Natural killer cell (primary cell): ENCODE measurements at regions of chr7 and their contacts with region 1.

Region 1: DNA sequence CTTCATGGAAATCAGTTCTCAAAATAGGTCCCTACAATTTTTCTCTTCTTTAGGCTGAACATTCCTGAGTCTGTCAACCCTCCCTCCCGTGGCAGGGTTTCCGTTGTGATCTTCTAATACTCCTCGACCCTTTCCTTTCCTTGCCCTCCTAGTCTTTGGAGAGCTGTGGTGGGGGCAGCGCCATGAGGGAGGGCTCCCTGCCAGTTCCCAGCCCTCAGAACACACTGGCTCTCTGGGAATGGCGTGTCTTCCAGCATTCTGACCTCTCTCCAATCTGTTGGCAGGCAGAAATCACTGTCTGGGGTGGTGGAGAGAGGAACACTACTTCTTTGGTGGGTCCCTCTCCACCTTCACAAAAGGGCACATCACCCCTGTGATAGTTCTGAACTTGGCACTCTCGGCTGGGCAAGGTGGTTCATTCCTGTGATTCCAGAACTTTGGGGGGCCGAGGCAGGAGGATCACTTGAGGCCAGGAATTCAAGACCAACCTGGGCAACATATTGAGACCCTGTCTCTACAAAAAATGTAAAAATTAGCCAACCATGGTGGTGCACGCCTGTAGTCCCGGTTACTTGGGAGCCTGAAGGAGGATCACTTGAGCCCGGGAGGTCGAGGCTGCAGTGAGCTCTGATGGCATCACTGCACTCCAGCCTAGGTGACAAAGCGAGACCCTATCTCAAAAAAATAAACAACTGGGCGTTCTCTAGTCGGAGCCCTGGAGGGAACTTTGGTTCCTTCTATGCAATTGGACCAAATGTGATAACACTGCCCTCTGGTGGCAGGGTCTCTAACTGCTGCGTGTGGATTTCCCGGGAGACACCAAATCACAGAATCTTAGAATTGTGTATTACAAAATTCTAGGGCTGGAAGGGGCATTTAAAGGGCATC is 13.1 kb upstream of the ARPC1A start:
- DNase-seq: peak; percentile 65 to 86
- ATAC-seq: peak; percentile 81 to 87 (median 87)
- H3K4me3 ChIP-seq: no peak overlapping the region
- H3K4me3 Mint-ChIP-seq: peak overlapping the region; percentile 37
- H3K27ac ChIP-seq: no peak overlapping the region
- H3K27ac Mint-ChIP-seq: no peak overlapping the region
- H3K4me1 ChIP-seq: peaks cover 6% of the 10 kb centered on the region
- H3K4me1 Mint-ChIP-seq: peaks cover 0 to 5% of the 10 kb centered on the region in 2 donors
- H3K27me3 ChIP-seq: no peaks in the 10 kb centered on the region
- H3K27me3 Mint-ChIP-seq: peaks cover 0 to 3% of the 10 kb centered on the region in 2 donors
- CTCF ChIP-seq: peak; percentile 80

Region 2: DNA sequence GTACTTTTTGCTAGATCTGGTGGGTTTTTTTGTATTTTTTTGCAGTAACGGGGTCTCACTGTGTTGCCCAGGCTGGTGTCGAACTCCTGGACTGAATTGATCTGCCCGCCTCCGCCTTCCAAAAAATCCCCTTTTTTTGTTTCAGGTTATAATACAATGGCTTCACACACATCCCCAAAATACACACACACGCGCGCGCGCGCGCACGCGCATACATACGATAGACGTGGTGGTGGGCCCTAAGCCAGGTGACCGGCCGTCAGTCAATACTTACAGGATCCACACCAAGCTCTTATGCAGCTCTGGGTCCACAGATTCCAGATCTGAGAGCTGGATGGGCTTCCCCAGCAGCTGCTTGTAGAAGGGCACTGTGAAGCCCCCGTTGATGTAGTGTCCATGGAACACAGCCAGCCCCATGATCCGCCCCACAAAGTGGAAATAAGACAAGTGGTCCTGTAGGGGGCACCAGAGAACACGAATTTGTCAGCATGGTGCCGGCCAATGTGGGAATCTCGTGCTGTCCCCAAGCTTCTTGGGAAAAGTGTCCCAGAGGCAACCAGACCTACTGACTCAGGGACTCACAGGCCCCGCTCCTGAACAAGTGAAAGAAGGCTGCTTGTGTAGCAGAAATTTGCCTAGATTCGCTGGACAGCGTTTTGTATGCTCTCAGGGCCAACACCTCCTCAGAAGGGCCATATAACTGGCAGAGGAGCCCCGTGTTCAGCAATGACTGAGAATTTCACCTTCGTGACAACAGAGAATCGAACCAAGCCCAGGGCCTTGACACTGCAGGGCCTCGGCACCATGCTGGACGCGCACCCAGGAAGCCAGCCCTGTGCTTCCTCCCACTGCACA is 272.2 kb before region 1 on chr7:
- intact Hi-C with region 1: loop called (anchors 1 kb)
- DNase-seq: peak; percentile 44 to 84
- ATAC-seq: peak; percentile 68 to 80 (median 78)
- H3K4me3 ChIP-seq: no peak overlapping the region
- H3K4me3 Mint-ChIP-seq: no peak overlapping the region
- H3K27ac ChIP-seq: no peak overlapping the region
- H3K27ac Mint-ChIP-seq: peak overlapping the region; percentile 41 to 52
- H3K4me1 ChIP-seq: no peaks in the 10 kb centered on the region
- H3K4me1 Mint-ChIP-seq: peaks cover 7 to 10% of the 10 kb centered on the region in 2 donors
- H3K27me3 ChIP-seq: no peaks in the 10 kb centered on the region
- H3K27me3 Mint-ChIP-seq: no peaks in the 10 kb centered on the region
- CTCF ChIP-seq: peak; percentile 72

Region 3: GRCh38 chr7:99143853-99144672 is 168.5 kb before region 1 on chr7 and contains the start of gene SMURF1:
- intact Hi-C with region 1: loop called (anchors 2 kb)
- DNase-seq: peak; percentile 83 to 90
- ATAC-seq: peak; percentile 55 to 90 (median 71)
- H3K4me3 ChIP-seq: peak within 1 kb of the TSS; percentile 57
- H3K4me3 Mint-ChIP-seq: peak within 1 kb of the TSS; percentile 96
- H3K27ac ChIP-seq: peak within 1 kb of the TSS; percentile 62
- H3K27ac Mint-ChIP-seq: peak within 1 kb of the TSS; percentile 94 to 95
- H3K4me1 ChIP-seq: peaks cover 22% of the 10 kb centered on the region
- H3K4me1 Mint-ChIP-seq: peaks cover 36 to 37% of the 10 kb centered on the region in 2 donors
- H3K27me3 ChIP-seq: peaks cover 2% of the 10 kb centered on the region
- H3K27me3 Mint-ChIP-seq: peaks cover 2 to 13% of the 10 kb centered on the region in 2 donors
- CTCF ChIP-seq: no peak
- total RNA-seq, gene SMURF1: 33.3 to 34.7 (median 34.2) TPM

Region 4: DNA sequence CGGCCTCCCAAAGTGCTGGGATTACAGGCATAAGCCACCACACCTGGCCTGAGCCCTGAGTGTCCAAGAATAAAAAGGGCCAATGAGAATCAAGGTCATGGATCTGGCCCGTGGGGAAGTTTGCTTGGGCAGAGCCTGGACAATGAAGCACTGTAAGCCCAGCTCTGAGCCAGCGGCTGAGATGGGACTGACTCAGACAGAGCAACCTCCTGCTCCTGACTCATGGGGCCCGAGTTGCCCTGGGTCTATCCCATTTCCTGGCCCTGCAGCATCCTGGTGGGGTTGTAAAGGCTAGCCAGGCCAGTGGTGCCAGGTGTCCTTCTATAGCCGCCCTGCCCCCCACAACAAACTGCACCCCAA is 45.1 kb before region 1 on chr7:
- intact Hi-C with region 1: no loop called
- DNase-seq: no peak
- ATAC-seq: no peak
- H3K4me3 ChIP-seq: no peak overlapping the region
- H3K4me3 Mint-ChIP-seq: no peak overlapping the region
- H3K27ac ChIP-seq: no peak overlapping the region
- H3K27ac Mint-ChIP-seq: no peak overlapping the region
- H3K4me1 ChIP-seq: no peaks in the 10 kb centered on the region
- H3K4me1 Mint-ChIP-seq: no peaks in the 10 kb centered on the region
- H3K27me3 ChIP-seq: no peaks in the 10 kb centered on the region
- H3K27me3 Mint-ChIP-seq: peaks cover 0 to 5% of the 10 kb centered on the region in 2 donors
- CTCF ChIP-seq: no peak